IMR-90 (cell line): ENCODE measurements at regions of chr9 and their contacts with region 1.

Region 1: DNA sequence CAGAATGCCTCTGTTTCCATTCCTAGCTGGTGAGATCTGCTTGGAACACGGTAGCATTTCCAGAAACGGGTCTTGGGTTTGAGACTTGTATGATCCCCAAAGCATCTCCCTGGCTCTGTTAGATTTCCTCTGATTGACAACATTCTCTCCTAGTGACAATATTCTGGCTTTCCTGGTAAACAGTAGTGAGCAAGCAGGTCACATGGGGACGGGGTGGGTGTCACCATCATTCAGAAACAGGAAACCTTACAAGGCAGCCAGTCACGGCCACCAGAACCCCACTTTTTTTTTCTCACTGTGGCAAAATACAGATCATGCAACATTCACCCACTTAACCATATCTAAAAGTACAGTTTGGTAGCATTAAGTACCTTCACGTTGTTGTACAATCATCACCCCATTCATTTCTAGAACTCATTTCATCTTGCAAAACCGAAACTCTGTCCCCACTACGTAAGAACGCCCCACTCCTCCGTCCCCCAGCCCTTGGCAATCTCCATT is 90.1 kb upstream of the LMX1B start:
- DNase-seq: no peak
- ATAC-seq: no peak
- H3K4me3 ChIP-seq: no peak overlapping the region
- H3K27ac ChIP-seq: no peak overlapping the region
- H3K4me1 ChIP-seq: no peaks in the 10 kb centered on the region
- H3K27me3 ChIP-seq: peaks cover 85% of the 10 kb centered on the region
- CTCF ChIP-seq: no peak
- POLR2A ChIP-seq: no peak
- RAD21 ChIP-seq: no peak

Region 2: DNA sequence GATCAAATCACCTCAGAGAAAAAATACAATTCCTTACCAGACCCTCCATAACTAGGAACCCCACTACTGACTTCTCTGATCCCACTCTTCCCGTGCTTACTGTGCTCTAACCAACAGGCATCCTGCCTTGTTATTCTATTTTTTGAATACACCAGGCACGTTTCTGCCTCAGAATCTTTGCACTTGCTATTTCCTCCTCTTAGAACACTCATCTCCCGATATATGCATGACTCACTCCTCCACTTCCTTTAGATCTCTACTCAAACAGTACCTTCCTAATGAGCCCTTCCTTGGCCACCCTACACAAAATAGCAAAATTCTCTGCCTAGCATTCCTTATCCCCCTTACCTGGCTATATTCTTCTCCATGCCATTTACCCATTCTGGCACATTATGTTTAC is 860.5 kb before region 1 on chr9:
- CTCF ChIA-PET with region 1: no interaction called
- POLR2A ChIA-PET with region 1: no interaction called
- dilution Hi-C with region 1: no loop called
- in situ Hi-C with region 1: no loop called
- intact Hi-C with region 1: no loop called
- DNase-seq: peak; percentile 79
- ATAC-seq: peak; percentile 69
- H3K4me3 ChIP-seq: no peak overlapping the region
- H3K27ac ChIP-seq: no peak overlapping the region
- H3K4me1 ChIP-seq: peaks cover 4% of the 10 kb centered on the region
- H3K27me3 ChIP-seq: no peaks in the 10 kb centered on the region
- CTCF ChIP-seq: no peak
- POLR2A ChIP-seq: no peak
- RAD21 ChIP-seq: no peak

Region 3: GRCh38 chr9:126386088-126386487 is 137.6 kb before region 1 on chr9:
- CTCF ChIA-PET with region 1: no interaction called
- POLR2A ChIA-PET with region 1: no interaction called
- dilution Hi-C with region 1: no loop called
- in situ Hi-C with region 1: no loop called
- intact Hi-C with region 1: no loop called
- DNase-seq: no peak
- ATAC-seq: peak; percentile 62; the same call in 1 of the 2 replicates
- H3K4me3 ChIP-seq: no peak overlapping the region
- H3K27ac ChIP-seq: no peak overlapping the region
- H3K4me1 ChIP-seq: peaks cover 3% of the 10 kb centered on the region; the same call in 1 of the 2 replicates
- H3K27me3 ChIP-seq: no peaks in the 10 kb centered on the region
- CTCF ChIP-seq: peak; percentile 29; the same call in 1 of the 2 replicates
- POLR2A ChIP-seq: no peak
- RAD21 ChIP-seq: peak; percentile 37

Region 4: DNA sequence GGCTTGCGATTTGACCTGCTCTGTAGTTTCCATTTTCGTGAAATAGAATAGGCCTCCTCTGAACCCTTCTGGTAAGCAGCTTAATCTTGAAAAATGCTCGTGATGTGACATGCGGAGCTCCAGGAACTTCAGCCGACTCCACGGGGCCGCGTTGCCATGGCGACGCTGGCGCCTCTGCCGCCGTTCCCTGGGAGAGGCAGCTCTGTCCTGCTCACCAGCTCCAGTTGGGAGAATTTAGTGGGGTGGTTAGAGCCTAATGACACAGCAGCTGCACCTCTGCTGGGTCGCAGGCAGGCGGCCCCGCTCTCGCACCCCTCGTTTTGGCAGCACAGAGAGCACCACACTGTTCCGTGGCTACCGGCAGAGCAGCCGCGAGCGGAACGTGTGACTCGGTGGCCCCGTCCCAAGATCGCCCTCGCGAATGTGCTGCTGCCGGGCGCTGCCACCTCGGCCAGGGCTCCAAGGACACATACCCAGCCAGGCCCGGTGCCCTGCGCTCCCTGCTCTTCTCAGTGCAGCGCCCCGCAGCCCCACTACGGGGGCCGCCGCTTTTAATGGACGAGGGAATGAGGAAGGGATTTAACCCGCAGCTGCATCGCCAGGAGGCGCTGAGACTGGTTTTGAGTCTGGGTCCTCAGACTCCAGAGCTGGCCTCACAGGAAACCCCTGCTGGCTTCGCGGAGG is 41.2 kb before region 1 on chr9:
- CTCF ChIA-PET with region 1: no interaction called
- POLR2A ChIA-PET with region 1: no interaction called
- dilution Hi-C with region 1: no loop called
- in situ Hi-C with region 1: no loop called
- intact Hi-C with region 1: no loop called
- DNase-seq: peak; percentile 41
- ATAC-seq: peak; percentile 49
- H3K4me3 ChIP-seq: no peak overlapping the region
- H3K27ac ChIP-seq: no peak overlapping the region
- H3K4me1 ChIP-seq: peaks cover 2% of the 10 kb centered on the region; the same call in 1 of the 2 replicates
- H3K27me3 ChIP-seq: no peaks in the 10 kb centered on the region
- CTCF ChIP-seq: no peak
- POLR2A ChIP-seq: no peak
- RAD21 ChIP-seq: no peak

Region 5: GRCh38 chr9:126874546-126875311 is 351.1 kb after region 1 on chr9:
- CTCF ChIA-PET with region 1: no interaction called
- POLR2A ChIA-PET with region 1: no interaction called
- dilution Hi-C with region 1: no loop called
- in situ Hi-C with region 1: no loop called
- intact Hi-C with region 1: loop called (anchors 10 kb)
- DNase-seq: peak; percentile 16
- ATAC-seq: peak; percentile 61
- H3K4me3 ChIP-seq: no peak overlapping the region
- H3K27ac ChIP-seq: no peak overlapping the region
- H3K4me1 ChIP-seq: peaks cover 3% of the 10 kb centered on the region
- H3K27me3 ChIP-seq: no peaks in the 10 kb centered on the region
- CTCF ChIP-seq: no peak
- POLR2A ChIP-seq: no peak
- RAD21 ChIP-seq: no peak